ENCODE measurements at regions of chr20 and their contacts with region 1.

Region 1: GRCh38 chr20:36614781-36615557 is 9.4 kb downstream of the RAB5IF start:
- DNase-seq: no peak

Region 2: DNA sequence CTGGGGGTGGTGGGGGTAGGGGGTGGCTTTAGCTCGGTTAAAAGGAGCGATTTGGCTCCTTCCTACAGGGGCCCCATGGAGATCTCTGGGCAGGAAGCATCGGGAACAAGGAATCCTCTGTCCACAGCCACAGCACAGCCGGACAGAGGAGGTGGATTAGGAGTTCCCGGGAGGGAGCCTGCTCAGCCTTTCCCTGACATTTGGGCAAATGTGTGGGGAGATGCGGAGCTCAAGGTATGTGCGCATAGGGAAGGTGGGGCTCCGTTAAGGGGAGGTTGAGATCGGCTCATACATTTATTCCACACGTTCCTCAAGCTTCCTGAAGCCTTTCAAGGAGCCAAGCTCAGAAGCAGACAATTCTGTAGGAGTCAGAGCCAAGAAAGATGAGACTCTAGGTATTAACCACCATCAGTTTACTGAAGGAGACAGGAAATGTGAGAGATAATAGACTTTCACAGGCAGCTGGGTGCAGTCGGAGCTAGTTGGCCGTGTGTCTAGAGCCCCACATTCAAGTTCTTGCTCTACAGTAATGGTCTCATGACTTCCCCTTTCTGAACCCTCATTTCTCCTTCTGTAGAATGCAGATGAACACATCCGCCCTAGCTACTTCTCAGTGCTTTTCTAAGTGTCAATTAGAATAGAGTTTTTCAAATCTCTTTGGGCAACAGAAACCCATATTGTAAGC is 501.3 kb before region 1 on chr20:
- intact Hi-C with region 1: no loop called
- DNase-seq: peak in 10 of 42 donors; percentile 24 to 55 (median 40)

Region 3: DNA sequence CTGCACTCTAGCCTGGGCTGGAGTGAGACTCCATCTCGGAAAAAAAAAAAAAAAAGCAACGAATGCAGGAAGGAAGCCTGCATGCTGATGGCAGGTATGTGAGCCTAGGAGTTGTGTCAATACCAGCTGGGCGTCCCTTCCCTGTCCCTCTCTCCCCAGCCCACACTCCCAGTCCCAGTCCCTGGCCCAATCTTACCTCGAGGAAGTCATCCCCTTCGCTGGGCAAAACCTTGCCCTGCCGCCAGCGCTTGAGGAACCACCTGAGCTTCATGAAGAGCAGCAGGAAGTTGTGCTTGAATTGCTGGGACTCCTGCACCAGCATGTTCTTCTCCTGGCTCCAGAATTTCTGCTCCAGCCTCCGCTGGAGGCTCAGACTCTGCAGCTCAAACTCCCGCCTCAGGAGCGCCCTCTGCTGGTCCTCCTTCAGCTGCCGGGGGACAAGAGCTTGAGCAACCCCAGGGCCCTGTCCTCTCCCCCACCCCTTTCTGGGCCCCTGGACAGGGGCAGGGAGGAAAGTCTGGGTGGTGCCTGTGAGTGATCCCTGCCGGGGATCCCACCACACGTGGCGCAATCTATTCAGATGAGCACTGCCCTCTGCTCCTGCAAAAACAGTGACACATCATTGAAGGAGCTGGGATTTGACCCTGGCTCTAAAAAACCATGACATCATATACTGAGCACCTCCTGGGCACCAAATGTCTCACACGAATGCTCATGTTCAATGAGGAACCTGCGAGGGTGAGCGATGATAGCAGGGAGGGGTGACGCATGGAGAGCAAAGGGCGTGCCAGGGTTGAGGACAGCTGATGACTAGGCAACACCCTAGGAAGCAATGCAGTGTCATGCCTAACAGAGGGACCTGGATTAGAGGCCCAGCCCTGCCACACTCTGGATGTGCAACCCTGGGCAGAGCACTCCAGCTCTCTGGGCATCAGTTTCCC is 193.6 kb after region 1 on chr20:
- intact Hi-C with region 1: no loop called
- DNase-seq: peak in 37 of 42 donors; percentile 34 to 86 (median 62)

Region 4: GRCh38 chr20:36951198-36951976 is 336.4 kb after region 1 on chr20 and contains the start of gene SAMHD1:
- intact Hi-C with region 1: loop called (anchors 5 kb)
- DNase-seq: peak; percentile 88 to 98 (median 96)

Measured in head of caudate nucleus (tissue), 42 donors.